ENCODE measurements at regions of chr11 and their contacts with region 1.

Region 1: GRCh38 chr11:123137431-123138224 is 57.4 kb downstream of the CLMP start:
- DNase-seq: peak; percentile 85
- H3K4me3 ChIP-seq: peak overlapping the region; percentile 6 to 40; a peak in 1 of 4 replicates
- H3K27ac ChIP-seq: peak overlapping the region in 1 of 2 experiments; percentile 99; a peak in 2 of 4 replicates
- H3K4me1 ChIP-seq: peaks cover 14 to 52% of the 10 kb centered on the region in 2 experiments
- H3K27me3 ChIP-seq: no peaks in the 10 kb centered on the region
- CTCF ChIP-seq: peak; percentile 39
- EP300 ChIP-seq: peak; percentile 46 to 70; a peak in 3 of 4 replicates
- RAD21 ChIP-seq: peak; percentile 28

Region 2: GRCh38 chr11:122439911-122440810 is 697.5 kb before region 1 on chr11:
- CTCF ChIA-PET with region 1: no interaction called
- POLR2A ChIA-PET with region 1: no interaction called
- DNase-seq: peak; percentile 48
- H3K4me3 ChIP-seq: peak overlapping the region; percentile 14 to 31; a peak in 3 of 4 replicates
- H3K27ac ChIP-seq: no peak overlapping the region; a peak in 1 of 4 replicates
- H3K4me1 ChIP-seq: peaks cover 0 to 3% of the 10 kb centered on the region in 2 experiments; a peak in 1 of 4 replicates
- H3K27me3 ChIP-seq: no peaks in the 10 kb centered on the region; the same call in 1 of the 2 replicates
- CTCF ChIP-seq: no peak
- EP300 ChIP-seq: no peak
- RAD21 ChIP-seq: no peak

Region 3: DNA sequence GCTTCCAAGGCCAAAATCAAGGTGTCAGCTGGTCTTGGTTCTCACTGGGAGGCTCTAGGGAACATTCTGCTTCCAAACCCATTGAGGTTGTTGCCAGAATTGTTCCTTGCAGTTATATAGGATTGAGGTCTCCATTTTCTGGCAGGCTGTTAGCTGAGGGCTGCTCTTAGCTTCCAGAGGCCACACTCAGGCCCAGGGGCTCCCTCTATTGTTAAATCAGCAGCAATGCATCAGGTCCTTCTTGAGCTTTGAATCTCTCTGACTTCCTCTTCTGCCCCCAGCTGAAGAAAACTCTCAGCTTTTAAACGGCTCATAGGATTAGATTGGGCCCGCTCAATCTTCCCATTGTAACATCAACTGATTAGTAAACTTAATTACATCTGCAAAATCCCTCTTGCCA is 116.7 kb before region 1 on chr11:
- CTCF ChIA-PET with region 1: no interaction called
- POLR2A ChIA-PET with region 1: no interaction called
- DNase-seq: peak; percentile 76
- H3K4me3 ChIP-seq: no peak overlapping the region
- H3K27ac ChIP-seq: no peak overlapping the region
- H3K4me1 ChIP-seq: no peaks in the 10 kb centered on the region
- H3K27me3 ChIP-seq: 0 out of 2 replicates have a peak, but pooled peaks cover 4% of the 10 kb centered on the region
- CTCF ChIP-seq: peak; percentile 63
- EP300 ChIP-seq: no peak
- RAD21 ChIP-seq: peak; percentile 78

Region 4: DNA sequence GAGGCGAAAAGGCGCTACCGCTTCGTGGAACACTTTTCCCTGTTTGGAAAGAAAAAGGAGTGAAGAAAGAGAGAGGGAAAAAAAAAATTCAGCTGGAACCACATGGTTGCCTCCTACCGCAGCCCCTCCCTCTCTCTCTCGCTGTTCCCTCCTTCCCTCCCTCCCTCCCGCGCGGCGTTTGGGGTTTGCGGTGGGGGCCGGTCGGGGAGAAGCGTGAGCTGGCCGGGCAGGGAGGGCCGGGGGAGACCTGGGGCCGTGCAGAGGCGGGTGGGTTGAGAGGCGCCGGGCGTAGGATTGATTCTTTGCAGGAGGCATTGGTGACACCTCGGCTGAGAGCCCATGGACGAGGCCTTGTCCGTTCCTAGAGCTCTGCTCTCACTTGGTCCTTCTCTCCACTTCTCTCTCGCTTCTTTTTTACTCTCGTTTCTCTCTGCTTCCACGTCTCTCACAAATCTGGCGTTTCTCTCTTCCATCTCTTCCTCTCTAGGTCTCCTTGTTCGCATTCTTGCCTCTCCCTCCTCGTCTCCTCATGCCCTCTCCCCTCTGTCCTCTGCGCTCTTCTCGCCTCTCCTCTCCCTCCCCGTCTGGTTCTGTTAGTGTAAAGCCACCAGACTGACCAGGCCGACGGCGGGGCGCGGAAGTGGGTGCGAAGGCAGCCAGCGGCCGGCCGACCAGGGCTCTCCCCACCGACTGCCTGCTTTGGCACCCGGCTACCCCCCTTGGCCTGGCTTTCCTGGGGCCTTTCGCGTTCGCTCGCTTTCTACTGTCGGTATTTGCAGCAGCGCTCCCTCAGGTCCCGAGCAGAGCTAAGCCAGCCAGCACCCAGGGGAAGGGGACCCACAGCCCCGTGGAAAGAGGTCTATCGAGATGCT is 57.8 kb after region 1 on chr11 and contains the start of gene CLMP:
- CTCF ChIA-PET with region 1: interaction called, 3 read pairs
- POLR2A ChIA-PET with region 1: interaction called, 16 read pairs
- DNase-seq: peak; percentile 91
- H3K4me3 ChIP-seq: peak within 1 kb of the TSS; percentile 72 to 85
- H3K27ac ChIP-seq: peak within 1 kb of the TSS; percentile 81 to 97
- H3K4me1 ChIP-seq: peaks cover 34 to 37% of the 10 kb centered on the region in 2 experiments
- H3K27me3 ChIP-seq: no peaks in the 10 kb centered on the region
- CTCF ChIP-seq: no peak
- EP300 ChIP-seq: peak; percentile 0 to 43; a peak in 1 of 4 replicates
- RAD21 ChIP-seq: no peak
- polyA plus RNA-seq, gene CLMP: 61.9 and 85.1 TPM in 2 replicates

Measured in SK-N-SH (cell line).